Mammary epithelial cell (primary cell): ENCODE measurements at regions of chr2 and their contacts with region 1.

Region 1: GRCh38 chr2:47323009-47323821 is 79.7 kb upstream of the MSH2 start:
- DNase-seq: peak; percentile 53
- H3K4me3 ChIP-seq: no peak overlapping the region
- H3K27ac ChIP-seq: no peak overlapping the region
- H3K4me1 ChIP-seq: no peaks in the 10 kb centered on the region
- H3K27me3 ChIP-seq: no peaks in the 10 kb centered on the region
- CTCF ChIP-seq: peak; percentile 99

Region 2: DNA sequence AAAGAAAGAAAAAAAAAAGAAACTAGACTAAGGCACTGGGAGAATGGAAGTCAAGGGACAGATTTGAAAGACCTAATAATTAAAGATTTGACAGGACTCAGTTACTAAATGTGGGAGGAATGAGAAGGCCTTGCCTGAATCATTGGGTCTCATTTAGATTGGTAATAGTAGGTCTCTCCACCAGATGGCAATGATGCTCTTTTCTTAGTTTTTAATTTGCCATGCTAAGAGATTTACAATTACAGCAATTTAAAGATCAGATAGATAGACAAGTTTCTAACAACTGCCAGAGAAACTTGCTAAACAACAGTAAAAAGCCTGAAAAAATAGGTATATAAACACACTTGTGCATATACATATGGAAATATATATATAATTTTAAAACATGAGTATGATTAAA is 690.9 kb before region 1 on chr2:
- CTCF ChIA-PET with region 1: no interaction called
- dilution Hi-C with region 1: no loop called
- in situ Hi-C with region 1: loop called in 1 of 2 experiments (anchors 25 kb)
- intact Hi-C with region 1: no loop called
- DNase-seq: peak; percentile 41
- H3K4me3 ChIP-seq: no peak overlapping the region
- H3K27ac ChIP-seq: no peak overlapping the region
- H3K4me1 ChIP-seq: no peaks in the 10 kb centered on the region
- H3K27me3 ChIP-seq: peaks cover 8% of the 10 kb centered on the region
- CTCF ChIP-seq: peak; percentile 57 to 60

Region 3: GRCh38 chr2:46876741-46877384 is 446.4 kb before region 1 on chr2:
- CTCF ChIA-PET with region 1: no interaction called
- dilution Hi-C with region 1: no loop called
- in situ Hi-C with region 1: no loop called
- intact Hi-C with region 1: loop called (anchors 2 kb)
- DNase-seq: peak; percentile 84
- H3K4me3 ChIP-seq: no peak overlapping the region
- H3K27ac ChIP-seq: no peak overlapping the region
- H3K4me1 ChIP-seq: peaks cover 27% of the 10 kb centered on the region
- H3K27me3 ChIP-seq: no peaks in the 10 kb centered on the region
- CTCF ChIP-seq: peak; percentile 46 to 65

Region 4: DNA sequence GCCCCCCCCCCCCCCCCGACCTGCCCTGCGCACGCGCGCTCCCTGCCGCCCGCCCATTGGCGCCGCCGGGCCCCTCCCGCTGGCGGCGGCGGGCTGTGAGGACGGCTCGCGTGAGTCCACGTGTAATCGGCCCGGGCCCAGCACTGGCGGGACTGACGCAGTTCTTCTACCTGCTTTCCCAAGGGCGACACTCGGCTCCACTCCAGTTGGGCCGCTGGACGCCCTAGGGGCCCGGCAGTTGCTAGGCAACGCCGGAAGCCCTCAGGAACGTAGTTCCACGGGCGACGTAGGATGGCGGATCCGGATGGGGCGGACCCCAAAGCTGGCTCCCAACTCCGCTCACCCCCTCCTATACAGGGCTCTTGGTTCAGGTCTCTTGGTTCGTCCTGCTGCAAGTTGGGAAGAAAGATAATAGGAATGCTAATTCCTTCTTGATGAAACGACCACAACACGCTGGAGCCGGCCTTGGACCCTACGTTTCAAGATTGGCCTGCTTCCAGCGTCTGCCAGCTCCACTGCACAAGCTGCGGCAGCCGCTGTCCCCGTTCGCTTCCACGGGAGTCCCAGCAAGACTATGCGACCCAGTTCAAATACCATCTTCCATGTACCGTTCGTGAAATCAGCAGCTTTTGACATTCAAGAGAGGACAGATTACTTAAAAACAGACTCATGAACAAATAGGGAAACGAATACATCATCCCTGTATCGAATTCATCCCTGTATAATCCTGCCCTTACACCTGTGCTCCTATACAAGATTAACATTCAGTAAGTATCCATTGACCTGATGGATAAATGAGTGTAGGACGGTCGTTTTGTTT is 407.2 kb before region 1 on chr2:
- CTCF ChIA-PET with region 1: interaction called, 3 read pairs
- dilution Hi-C with region 1: no loop called
- in situ Hi-C with region 1: no loop called
- intact Hi-C with region 1: loop called (anchors 1 kb)
- DNase-seq: peak; percentile 87
- H3K4me3 ChIP-seq: peak overlapping the region; percentile 67 to 97 (median 74)
- H3K27ac ChIP-seq: peak overlapping the region; percentile 92
- H3K4me1 ChIP-seq: peaks cover 26% of the 10 kb centered on the region
- H3K27me3 ChIP-seq: no peaks in the 10 kb centered on the region
- CTCF ChIP-seq: no peak

Region 5: DNA sequence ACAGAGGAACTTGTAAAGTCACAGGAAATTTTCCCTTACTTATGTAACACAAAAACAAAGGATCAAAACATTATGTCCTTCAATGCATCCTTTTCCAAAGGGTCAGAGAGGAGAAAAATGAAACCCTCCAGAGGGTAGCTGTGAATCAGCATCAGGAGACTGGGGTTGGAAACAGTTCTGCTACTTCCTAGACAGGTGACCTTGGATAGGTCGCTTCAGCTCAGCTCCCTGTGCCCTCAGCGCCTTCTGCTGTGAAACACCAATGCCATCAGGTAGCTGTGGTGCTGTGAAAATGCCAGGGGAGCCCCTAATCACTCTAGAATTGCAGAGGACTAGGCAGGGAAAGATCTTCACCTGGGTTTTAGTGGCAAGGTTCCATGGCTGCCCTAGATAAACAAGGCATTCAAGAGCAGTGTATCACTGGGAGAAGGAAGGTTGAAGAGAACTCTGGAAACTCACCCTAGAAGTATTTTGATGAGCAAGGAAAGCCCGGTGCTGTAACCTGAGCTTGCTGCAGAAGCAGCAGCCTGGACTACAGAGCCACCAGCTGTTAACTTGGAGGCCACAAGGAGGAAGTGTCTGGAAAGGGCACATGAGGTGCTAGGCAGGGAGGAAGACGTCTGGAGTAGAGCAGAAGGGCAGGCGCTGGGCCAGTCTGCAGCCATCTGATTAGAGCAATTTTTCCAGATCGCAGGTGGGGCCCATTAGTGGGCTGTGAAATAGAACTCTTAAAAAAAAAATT is 306.9 kb before region 1 on chr2:
- CTCF ChIA-PET with region 1: no interaction called
- dilution Hi-C with region 1: no loop called
- in situ Hi-C with region 1: no loop called
- intact Hi-C with region 1: loop called (anchors 1 kb)
- DNase-seq: peak; percentile 80
- H3K4me3 ChIP-seq: no peak overlapping the region
- H3K27ac ChIP-seq: no peak overlapping the region
- H3K4me1 ChIP-seq: peaks cover 5% of the 10 kb centered on the region
- H3K27me3 ChIP-seq: no peaks in the 10 kb centered on the region
- CTCF ChIP-seq: no peak

Region 6: GRCh38 chr2:47250630-47251403 is 72.4 kb before region 1 on chr2:
- CTCF ChIA-PET with region 1: no interaction called
- dilution Hi-C with region 1: no loop called
- in situ Hi-C with region 1: no loop called
- intact Hi-C with region 1: no loop called
- DNase-seq: peak; percentile 63
- H3K4me3 ChIP-seq: no peak overlapping the region
- H3K27ac ChIP-seq: no peak overlapping the region
- H3K4me1 ChIP-seq: no peaks in the 10 kb centered on the region
- H3K27me3 ChIP-seq: no peaks in the 10 kb centered on the region
- CTCF ChIP-seq: no peak

Region 7: DNA sequence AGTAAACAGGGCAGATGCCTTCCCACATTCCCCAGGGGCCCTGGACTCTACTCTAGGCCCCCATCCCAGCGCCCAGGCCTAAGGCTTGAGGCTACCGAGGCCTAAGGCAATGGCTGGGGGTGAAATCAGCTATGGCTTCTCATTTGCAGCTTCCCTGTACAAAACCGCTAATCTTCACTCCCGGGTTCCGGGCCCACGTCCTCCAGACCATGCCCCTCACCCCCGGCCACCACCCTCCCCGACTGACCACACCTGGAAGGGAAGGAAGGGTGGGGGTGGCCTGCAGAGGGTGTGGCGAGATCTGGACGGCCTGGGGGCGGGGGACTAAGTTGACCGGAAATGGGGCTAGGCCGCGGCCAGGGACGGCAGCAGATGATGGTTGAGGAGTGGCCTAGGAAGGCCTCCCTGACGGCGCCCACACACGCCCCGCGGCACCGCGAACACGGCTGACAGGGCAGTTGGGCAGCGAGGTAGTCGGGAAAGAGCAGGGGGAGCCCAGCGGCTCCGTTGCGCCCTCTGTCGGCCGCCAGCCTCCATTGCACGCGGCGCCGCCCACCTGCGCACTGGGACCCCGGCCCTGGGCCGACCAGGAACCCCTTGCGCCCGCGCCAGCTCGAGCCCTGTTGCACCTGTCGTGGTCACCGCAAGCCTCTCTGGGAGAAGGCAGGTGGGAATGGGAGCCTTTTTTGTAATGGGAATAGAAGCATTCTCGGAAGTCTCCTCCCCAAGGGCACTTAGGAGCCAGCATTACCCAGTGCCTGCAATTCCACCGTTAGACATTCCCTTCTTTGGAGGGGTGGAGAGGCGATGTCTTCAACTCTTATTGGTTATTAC is 51.0 kb before region 1 on chr2:
- CTCF ChIA-PET with region 1: no interaction called
- dilution Hi-C with region 1: no loop called
- in situ Hi-C with region 1: no loop called
- intact Hi-C with region 1: loop called (anchors 1 kb)
- DNase-seq: peak; percentile 33
- H3K4me3 ChIP-seq: peak overlapping the region in 2 of 3 experiments; percentile 22 to 42
- H3K27ac ChIP-seq: no peak overlapping the region
- H3K4me1 ChIP-seq: peaks cover 36% of the 10 kb centered on the region
- H3K27me3 ChIP-seq: no peaks in the 10 kb centered on the region
- CTCF ChIP-seq: peak; percentile 69 to 96